MCF 10A (cell line): ENCODE measurements at regions of chr17 and their contacts with region 1.

Region 1: DNA sequence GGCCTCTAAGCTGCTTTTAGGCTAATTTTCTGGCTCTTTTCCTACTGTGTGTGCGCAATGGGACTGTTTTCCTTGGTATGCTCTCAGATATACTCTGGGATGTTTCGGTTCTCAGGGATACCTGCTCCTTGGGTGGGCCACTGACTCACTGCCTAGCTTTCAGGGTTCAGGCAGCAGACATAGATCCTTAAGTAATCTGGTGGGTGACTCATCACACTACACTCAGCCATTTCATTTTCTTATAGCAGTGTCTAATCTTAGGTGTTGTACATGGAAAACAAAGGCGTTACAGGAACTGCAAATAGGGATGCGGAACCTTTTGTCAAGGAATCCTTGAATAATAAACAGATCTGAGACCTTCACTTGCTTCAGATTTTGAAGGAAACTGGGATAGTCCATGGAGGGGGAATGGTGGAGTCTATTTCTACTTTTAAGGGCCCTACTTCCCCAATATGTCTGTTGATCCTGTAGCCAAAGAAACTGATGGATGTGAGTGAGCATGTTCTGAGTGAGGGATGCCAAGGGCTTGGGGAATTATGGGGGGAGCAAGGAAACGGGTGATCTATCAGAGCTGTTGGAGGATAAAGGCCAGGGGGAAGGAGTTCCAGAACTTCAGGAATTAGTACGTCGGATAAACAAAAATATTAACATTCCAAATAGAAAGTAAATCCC is 40.7 kb upstream of the TEKT1 start:
- DNase-seq: peak; percentile 99
- H3K4me3 Mint-ChIP-seq: peak overlapping the region; percentile 54
- H3K27ac Mint-ChIP-seq: peak overlapping the region; percentile 63
- H3K4me1 Mint-ChIP-seq: peaks cover 29% of the 10 kb centered on the region
- H3K27me3 Mint-ChIP-seq: no peaks in the 10 kb centered on the region
- CTCF ChIP-seq: no peak

Region 2: GRCh38 chr17:6782244-6782643 is 90.0 kb before region 1 on chr17:
- CTCF ChIA-PET with region 1: no interaction called
- POLR2A ChIA-PET with region 1: no interaction called
- intact Hi-C with region 1: no loop called
- DNase-seq: no peak
- H3K4me3 Mint-ChIP-seq: no peak overlapping the region
- H3K27ac Mint-ChIP-seq: no peak overlapping the region
- H3K4me1 Mint-ChIP-seq: peaks cover 20% of the 10 kb centered on the region
- H3K27me3 Mint-ChIP-seq: no peaks in the 10 kb centered on the region
- CTCF ChIP-seq: no peak

Region 3: GRCh38 chr17:6853764-6854442 is 18.4 kb before region 1 on chr17:
- CTCF ChIA-PET with region 1: interaction called, 19 read pairs
- POLR2A ChIA-PET with region 1: interaction called, 35 read pairs
- intact Hi-C with region 1: no loop called
- DNase-seq: peak; percentile 71
- H3K4me3 Mint-ChIP-seq: peak overlapping the region; percentile 86
- H3K27ac Mint-ChIP-seq: peak overlapping the region; percentile 94
- H3K4me1 Mint-ChIP-seq: peaks cover 14% of the 10 kb centered on the region
- H3K27me3 Mint-ChIP-seq: no peaks in the 10 kb centered on the region
- CTCF ChIP-seq: peak; percentile 52